ENCODE measurements at regions of chr1 and their contacts with region 1.

Region 1: GRCh38 chr1:6602669-6603237 is at the start of gene KLHL21:
- DNase-seq: peak; percentile 64
- ATAC-seq: peak; percentile 77
- H3K4me3 ChIP-seq: peak within 1 kb of the TSS; percentile 87 to 96
- H3K27ac ChIP-seq: peak within 1 kb of the TSS; percentile 95
- H3K4me1 ChIP-seq: peaks cover 22 to 33% of the 10 kb centered on the region in 2 experiments
- H3K27me3 ChIP-seq: no peaks in the 10 kb centered on the region
- CTCF ChIP-seq: no peak
- POLR2A ChIP-seq: peak; percentile 97
- RAD21 ChIP-seq: no peak
- total RNA-seq, gene KLHL21: 27.5 TPM

Region 2: DNA sequence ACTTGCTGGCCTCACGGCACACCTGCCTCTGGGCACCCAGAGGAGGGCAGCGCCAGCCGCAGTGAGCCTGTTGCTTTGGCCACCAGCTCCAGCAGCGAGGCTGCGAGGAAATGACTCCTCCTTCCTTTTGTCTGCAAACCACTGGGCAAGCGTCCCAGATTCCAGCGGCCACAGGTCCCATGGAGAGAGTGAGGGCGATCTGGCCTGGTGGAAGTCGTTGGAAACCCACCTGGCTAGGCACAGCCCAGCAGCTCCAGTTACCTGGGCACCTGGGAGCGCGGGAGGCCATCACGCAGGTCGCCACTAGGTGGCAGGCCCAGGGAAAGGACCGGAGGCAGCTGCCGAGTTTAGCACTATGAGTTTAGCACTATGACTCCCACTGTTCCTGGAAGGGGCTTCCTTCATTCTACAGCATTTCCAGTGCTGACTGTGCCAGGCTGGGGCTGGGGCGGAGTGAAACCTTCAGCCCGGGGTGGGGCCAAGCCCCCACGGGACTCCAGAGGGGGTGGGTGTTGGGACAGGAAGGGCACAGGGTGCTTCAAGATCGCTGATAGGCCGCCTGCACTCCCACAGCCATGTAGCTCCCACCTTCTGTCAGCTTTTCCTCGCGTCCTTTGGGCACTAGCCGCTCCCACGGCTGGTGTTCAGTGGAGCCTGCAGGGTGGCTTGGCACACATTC is 179.3 kb before region 1 on chr1:
- CTCF ChIA-PET with region 1: no interaction called
- POLR2A ChIA-PET with region 1: no interaction called
- RAD21 ChIA-PET with region 1: no interaction called
- intact Hi-C with region 1: no loop called
- DNase-seq: peak; percentile 80
- ATAC-seq: peak; percentile 50
- H3K4me3 ChIP-seq: peak overlapping the region; percentile 62 to 76
- H3K27ac ChIP-seq: peak overlapping the region; percentile 37
- H3K4me1 ChIP-seq: peaks cover 65 to 89% of the 10 kb centered on the region in 2 experiments
- H3K27me3 ChIP-seq: no peaks in the 10 kb centered on the region
- CTCF ChIP-seq: peak in 2 of 3 experiments; percentile 90 to 95; a peak in 4 of 6 replicates
- POLR2A ChIP-seq: no peak
- RAD21 ChIP-seq: no peak

Region 3: GRCh38 chr1:6554031-6554906 is 48.5 kb before region 1 on chr1 and contains the start of gene NOL9:
- CTCF ChIA-PET with region 1: interaction called, 3 read pairs
- POLR2A ChIA-PET with region 1: no interaction called
- RAD21 ChIA-PET with region 1: interaction called in 1 of 2 experiments, 3 read pairs
- intact Hi-C with region 1: loop called (anchors 2 kb)
- DNase-seq: peak; percentile 78
- ATAC-seq: peak; percentile 91
- H3K4me3 ChIP-seq: peak within 1 kb of the TSS; percentile 98
- H3K27ac ChIP-seq: peak within 1 kb of the TSS; percentile 96
- H3K4me1 ChIP-seq: peaks cover 9 to 14% of the 10 kb centered on the region in 2 experiments
- H3K27me3 ChIP-seq: no peaks in the 10 kb centered on the region
- CTCF ChIP-seq: peak; percentile 81 to 89 (median 88)
- POLR2A ChIP-seq: peak; percentile 57
- RAD21 ChIP-seq: peak; percentile 58
- total RNA-seq, gene NOL9: 46.4 TPM

Region 4: GRCh38 chr1:6579374-6580118 is 23.2 kb before region 1 on chr1 and contains the start of gene ZBTB48:
- CTCF ChIA-PET with region 1: no interaction called
- POLR2A ChIA-PET with region 1: interaction called, 10 read pairs
- RAD21 ChIA-PET with region 1: no interaction called
- intact Hi-C with region 1: no loop called
- DNase-seq: peak; percentile 91
- ATAC-seq: peak; percentile 96
- H3K4me3 ChIP-seq: peak within 1 kb of the TSS; percentile 79 to 91
- H3K27ac ChIP-seq: peak within 1 kb of the TSS; percentile 48
- H3K4me1 ChIP-seq: peaks cover 14 to 23% of the 10 kb centered on the region in 2 experiments
- H3K27me3 ChIP-seq: no peaks in the 10 kb centered on the region
- CTCF ChIP-seq: no peak
- POLR2A ChIP-seq: peak; percentile 49
- RAD21 ChIP-seq: no peak
- total RNA-seq, gene ZBTB48: 41.9 TPM

Region 5: GRCh38 chr1:7026169-7026568 is 423.4 kb after region 1 on chr1:
- CTCF ChIA-PET with region 1: no interaction called
- POLR2A ChIA-PET with region 1: no interaction called
- RAD21 ChIA-PET with region 1: no interaction called
- intact Hi-C with region 1: no loop called
- DNase-seq: no peak
- ATAC-seq: peak; percentile 52
- H3K4me3 ChIP-seq: no peak overlapping the region
- H3K27ac ChIP-seq: no peak overlapping the region
- H3K4me1 ChIP-seq: peaks cover 0 to 12% of the 10 kb centered on the region in 2 experiments; a peak in 2 of 4 replicates
- H3K27me3 ChIP-seq: peaks cover 16% of the 10 kb centered on the region; the same call in 1 of the 2 replicates
- CTCF ChIP-seq: no peak
- POLR2A ChIP-seq: no peak
- RAD21 ChIP-seq: no peak

Measured in HCT116 (cell line).